Activated T-helper 2 cell treated with anti-CD3 and anti-CD28 coated beads, Interferon-gamma antibody, Interleukin-2, Interleukin-4, amounts not matched to agents 10 μg/mL and 5 μg/mL and 100 μg/mL, durations not matched to agents 14 hours and 24 hours and 36 hours (primary cell): ENCODE measurements at regions of chr7 and their contacts with region 1.

Region 1: DNA sequence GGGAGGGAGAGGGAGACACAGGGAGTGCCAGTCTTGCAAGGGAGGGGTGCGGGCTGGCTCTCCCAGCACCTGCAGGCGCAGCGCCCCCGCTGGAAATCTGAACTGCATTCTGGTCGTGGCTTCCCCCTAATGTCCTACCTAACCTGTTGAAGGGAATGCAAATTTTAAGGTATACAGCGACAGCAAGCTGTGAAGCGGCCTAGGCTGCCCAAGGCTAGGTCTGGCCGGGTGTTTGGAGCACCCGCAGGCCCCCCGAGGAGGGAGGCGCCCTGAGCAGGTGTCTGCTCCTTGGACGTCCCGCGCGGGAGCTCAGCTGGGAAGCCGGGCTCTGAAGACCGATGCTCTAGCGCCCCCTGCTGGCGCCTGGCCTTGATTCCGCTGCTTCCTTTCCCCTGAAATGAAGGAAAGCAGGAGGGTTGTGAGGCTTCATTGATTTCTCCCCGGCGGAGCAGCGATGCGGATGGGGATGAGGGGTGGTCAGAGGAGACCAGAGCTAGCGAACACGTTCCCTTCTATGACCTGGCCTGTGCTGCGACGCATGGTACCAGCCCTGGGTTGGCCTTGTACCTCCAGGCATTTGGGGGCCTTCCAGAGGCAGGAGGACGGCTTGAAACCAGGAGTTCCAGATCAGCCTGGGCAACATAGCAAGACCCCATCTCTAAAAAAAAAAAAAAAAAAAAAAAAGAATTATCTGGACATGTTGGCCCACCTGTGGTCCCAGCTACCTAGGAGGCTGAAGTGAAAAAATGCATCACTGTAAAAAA is 601.3 kb downstream of the GALNT17 start:
- DNase-seq: peak; percentile 32
- H3K4me3 Mint-ChIP-seq: no peak overlapping the region
- H3K27ac Mint-ChIP-seq: no peak overlapping the region
- H3K4me1 Mint-ChIP-seq: no peaks in the 10 kb centered on the region
- H3K27me3 Mint-ChIP-seq: no peaks in the 10 kb centered on the region

Region 2: GRCh38 chr7:70829221-70830059 is 903.8 kb before region 1 on chr7:
- intact Hi-C with region 1: loop called (anchors 1 kb)
- DNase-seq: peak; percentile 46
- H3K4me3 Mint-ChIP-seq: no peak overlapping the region
- H3K27ac Mint-ChIP-seq: no peak overlapping the region
- H3K4me1 Mint-ChIP-seq: peaks cover 6% of the 10 kb centered on the region
- H3K27me3 Mint-ChIP-seq: peaks cover 4% of the 10 kb centered on the region

Region 3: DNA sequence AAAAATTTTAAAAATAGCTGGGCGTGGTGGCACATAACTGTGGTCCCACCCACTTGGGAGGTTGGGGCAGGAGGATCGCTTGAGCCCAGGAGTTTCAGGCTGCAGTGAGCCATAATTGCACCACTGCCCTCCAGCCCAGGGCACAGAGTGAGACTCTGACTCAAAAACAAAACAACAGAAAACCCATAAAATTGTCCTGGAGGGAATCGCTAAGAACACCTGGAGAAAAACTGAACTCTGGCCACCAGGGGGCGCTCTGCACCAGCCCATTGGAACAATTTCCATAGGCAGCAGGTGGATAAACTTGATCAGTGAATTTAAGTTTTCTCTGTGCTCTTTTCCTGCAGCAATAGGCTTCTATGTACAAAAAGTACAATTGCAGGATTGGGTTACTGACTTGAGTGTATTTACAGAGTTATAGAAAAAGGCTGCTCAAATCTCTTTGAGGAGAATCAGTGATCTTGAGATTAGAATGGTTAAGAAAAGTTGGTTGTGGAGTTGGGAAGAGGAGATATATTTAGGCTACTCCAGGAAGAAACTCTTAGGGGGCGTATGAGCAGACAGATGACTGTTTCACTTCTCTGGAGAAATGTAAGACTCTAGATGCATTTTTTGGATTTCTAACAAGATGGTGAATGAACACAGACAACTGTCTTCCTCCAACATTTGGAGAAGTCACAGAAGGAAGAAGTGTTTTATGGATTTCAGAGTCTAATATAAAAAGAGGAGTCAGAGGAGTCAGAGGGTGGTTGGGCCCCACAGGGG is 876.2 kb before region 1 on chr7:
- intact Hi-C with region 1: loop called (anchors 2 kb)
- DNase-seq: peak; percentile 19
- H3K4me3 Mint-ChIP-seq: no peak overlapping the region
- H3K27ac Mint-ChIP-seq: no peak overlapping the region
- H3K4me1 Mint-ChIP-seq: no peaks in the 10 kb centered on the region
- H3K27me3 Mint-ChIP-seq: no peaks in the 10 kb centered on the region

Region 4: DNA sequence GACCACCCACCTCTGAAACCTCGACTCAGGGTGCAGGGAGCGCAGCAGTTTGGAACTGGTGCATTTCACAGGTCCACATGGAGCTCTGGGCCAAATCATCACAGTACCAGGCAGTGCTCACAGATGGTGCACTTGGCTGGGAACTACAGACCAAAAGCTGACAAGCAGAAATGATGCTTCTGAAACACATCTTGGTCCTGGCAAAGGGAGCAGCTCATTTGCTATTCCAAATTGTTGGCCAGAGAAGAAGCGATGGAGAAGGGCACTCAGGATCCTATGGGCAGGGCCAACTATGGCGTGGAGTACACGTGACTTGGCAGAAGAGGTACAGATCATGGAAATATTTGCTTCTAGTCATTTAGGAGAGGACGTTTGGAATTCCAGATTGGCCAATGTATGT is 295.0 kb after region 1 on chr7:
- intact Hi-C with region 1: no loop called
- DNase-seq: no peak
- H3K4me3 Mint-ChIP-seq: no peak overlapping the region
- H3K27ac Mint-ChIP-seq: no peak overlapping the region
- H3K4me1 Mint-ChIP-seq: no peaks in the 10 kb centered on the region
- H3K27me3 Mint-ChIP-seq: no peaks in the 10 kb centered on the region